Right cardiac atrium (tissue), 5 donors: ENCODE measurements at regions of chr6 and their contacts with region 1.

Region 1: DNA sequence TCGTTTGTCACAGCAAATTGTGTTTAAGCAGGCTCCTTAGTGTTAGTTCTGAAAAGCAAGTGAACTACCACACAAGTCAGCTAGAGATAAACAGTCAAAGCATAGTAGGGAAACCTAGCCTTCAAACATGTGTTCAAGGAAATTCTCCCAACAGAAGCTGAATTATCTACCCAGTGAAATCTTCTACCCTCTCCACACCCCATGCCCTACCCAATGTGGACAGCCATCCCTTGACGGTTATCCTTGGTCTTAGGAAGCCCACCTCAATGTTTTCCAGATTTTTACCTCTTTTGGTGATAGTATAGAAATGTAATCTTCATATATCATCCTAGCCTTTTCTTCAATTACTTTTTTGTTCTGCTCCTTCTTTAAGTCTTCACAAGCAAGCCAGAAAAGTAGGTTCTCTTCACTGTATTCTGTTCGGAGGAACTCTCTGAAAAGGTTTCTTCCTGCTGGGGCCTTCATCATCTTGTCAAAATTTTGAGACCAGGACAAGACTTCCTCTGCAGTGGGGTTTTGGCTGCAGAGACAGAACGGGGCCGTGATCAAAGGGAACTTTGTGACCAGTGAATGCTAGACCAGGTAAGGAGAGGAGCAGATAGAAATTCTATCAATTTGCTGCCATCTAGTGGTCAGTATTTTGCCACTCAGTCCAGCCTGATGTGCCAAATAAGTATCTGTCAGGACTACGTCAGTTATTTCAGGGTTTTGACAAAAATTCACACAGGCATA is 21.6 kb upstream of the MTRF1L start:
- DNase-seq: no peak
- ATAC-seq: peak; percentile 75 to 87
- H3K4me3 ChIP-seq: no peak overlapping the region
- H3K27ac ChIP-seq: no peak overlapping the region
- H3K4me1 ChIP-seq: no peaks in the 10 kb centered on the region
- H3K27me3 ChIP-seq: no peaks in the 10 kb centered on the region

Region 2: GRCh38 chr6:152750694-152751093 is 273.4 kb before region 1 on chr6 and contains the start of gene VIP:
- intact Hi-C with region 1: no loop called
- DNase-seq: no peak
- ATAC-seq: no peak
- H3K4me3 ChIP-seq: no peak within 1 kb of the TSS
- H3K27ac ChIP-seq: no peak within 1 kb of the TSS
- H3K4me1 ChIP-seq: no peaks in the 10 kb centered on the region
- H3K27me3 ChIP-seq: no peaks in the 10 kb centered on the region
- total RNA-seq, gene VIP: 0.29 to 0.91 (median 0.66) TPM in 3 of 4 donors, not detected in the other

Region 3: DNA sequence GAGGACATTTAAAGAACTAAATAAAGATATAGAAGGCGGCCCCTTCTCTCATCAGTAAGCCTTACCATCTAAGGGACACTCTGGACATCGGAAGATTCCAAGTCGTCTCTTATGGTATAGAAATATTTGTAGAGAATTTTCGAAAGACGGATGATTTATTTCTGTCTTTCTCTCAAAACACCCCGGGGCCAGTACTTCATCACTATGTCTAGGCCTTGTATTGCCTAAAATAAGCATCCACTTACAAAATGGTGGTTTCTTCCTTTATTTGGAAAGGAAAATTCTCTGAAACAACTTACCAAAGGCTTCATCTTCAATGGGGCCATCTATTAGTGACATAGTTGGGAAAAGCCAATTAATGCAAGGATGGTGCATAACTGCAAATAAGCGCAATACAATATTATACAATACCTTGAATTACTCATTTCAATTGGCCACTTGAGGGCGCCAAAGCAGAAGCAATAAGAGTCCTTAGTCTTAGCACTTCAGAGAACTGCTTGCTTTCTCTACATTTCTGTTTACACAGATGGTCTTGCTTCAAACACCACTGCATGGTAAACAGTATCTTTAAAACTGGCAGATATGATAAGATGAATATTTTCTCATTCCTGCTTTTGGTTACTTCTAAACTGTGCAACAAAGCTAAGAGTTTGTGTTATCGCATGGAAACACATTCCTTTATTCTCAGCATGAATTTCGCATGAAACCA is 160.4 kb before region 1 on chr6:
- intact Hi-C with region 1: loop called in 3 of 4 experiments (anchors 5 kb)
- DNase-seq: peak; percentile 31 to 57 (median 53)
- ATAC-seq: peak; percentile 74 to 78
- H3K4me3 ChIP-seq: no peak overlapping the region
- H3K27ac ChIP-seq: no peak overlapping the region
- H3K4me1 ChIP-seq: no peaks in the 10 kb centered on the region
- H3K27me3 ChIP-seq: no peaks in the 10 kb centered on the region